ENCODE measurements at regions of chr1 and their contacts with region 1.

Region 1: DNA sequence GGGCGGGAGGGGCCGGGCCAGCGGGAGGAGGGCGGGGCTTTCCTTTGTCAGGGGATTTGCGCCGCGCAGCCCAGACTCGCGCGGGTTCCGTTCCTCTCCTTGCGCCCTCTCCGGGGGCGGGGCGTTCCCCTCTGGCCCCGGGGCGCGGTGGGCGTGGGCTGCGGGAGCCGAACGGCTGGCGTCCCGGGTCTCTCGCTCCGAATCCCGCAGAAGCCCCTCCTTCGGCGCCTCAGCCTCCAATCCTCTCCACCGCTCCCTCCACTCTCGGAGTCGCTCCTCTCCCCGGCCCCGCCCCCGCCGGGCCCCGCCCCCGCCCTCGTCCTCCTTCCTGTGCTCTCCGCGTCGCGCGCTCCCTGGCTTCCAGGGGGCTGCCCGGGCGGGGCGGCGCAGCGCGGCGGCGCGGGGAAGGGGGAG is 82.8 kb upstream of the BMP8A start:
- DNase-seq: peak; percentile 83 to 98
- H3K4me3 ChIP-seq: peak overlapping the region; percentile 97
- H3K27ac ChIP-seq: no peak overlapping the region
- H3K4me1 ChIP-seq: peaks cover 56% of the 10 kb centered on the region
- H3K27me3 ChIP-seq: no peaks in the 10 kb centered on the region
- CTCF ChIP-seq: no peak

Region 2: GRCh38 chr1:39098546-39099250 is 309.9 kb before region 1 on chr1:
- CTCF ChIA-PET with region 1: interaction called, 13 read pairs
- POLR2A ChIA-PET with region 1: no interaction called
- intact Hi-C with region 1: loop called (anchors 2 kb)
- DNase-seq: peak; percentile 76 to 94
- H3K4me3 ChIP-seq: no peak overlapping the region
- H3K27ac ChIP-seq: no peak overlapping the region
- H3K4me1 ChIP-seq: peaks cover 27% of the 10 kb centered on the region
- H3K27me3 ChIP-seq: no peaks in the 10 kb centered on the region
- CTCF ChIP-seq: peak; percentile 89

Region 3: DNA sequence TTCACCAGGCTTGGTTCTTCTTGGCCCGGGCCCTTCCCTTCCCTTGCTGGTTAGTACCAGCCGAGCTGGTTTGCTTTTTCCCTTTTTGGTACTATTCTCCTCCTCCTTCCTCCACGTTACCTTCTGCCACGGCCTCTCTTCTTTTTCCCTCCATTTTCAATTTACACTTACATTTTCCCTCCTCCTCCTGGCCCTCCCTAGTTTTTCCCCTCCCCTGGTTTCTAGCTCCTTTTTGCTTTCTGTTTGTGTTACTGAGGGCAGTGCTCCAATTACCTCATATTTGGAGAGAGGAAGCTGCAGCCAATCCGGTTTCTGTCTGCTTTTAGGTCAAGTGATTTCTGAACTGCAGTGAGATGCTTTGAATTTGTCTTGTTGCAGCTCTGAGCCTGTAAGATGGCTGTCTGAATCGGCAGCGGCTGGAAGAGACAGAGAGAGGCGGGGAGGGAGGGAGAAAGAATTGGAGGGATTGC is 140.5 kb before region 1 on chr1:
- CTCF ChIA-PET with region 1: no interaction called
- POLR2A ChIA-PET with region 1: no interaction called
- intact Hi-C with region 1: loop called (anchors 1 kb)
- DNase-seq: no peak
- H3K4me3 ChIP-seq: no peak overlapping the region
- H3K27ac ChIP-seq: no peak overlapping the region
- H3K4me1 ChIP-seq: no peaks in the 10 kb centered on the region
- H3K27me3 ChIP-seq: no peaks in the 10 kb centered on the region
- CTCF ChIP-seq: no peak

Region 4: DNA sequence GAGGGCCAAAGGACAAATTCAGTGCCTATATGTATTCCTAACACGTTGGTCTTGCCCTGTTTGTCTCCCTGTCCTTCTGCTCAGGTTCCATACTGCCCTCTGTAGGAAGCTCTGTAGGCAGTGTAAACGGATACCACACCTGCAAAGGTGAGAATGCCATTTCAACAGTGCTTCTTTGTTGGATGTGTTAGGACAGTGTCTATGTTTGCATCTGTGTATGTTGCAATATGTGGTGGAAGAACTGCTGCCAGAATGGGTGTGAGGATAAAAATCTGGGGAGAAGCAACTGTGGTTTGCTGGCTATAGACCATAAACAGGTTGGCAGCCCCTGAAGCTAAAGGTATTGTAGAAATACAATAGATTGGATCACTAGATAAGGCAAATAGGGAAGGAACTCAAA is 30.3 kb before region 1 on chr1:
- CTCF ChIA-PET with region 1: interaction called, 14 read pairs
- POLR2A ChIA-PET with region 1: no interaction called
- intact Hi-C with region 1: loop called (anchors 2 kb)
- DNase-seq: peak; percentile 34 to 84
- H3K4me3 ChIP-seq: no peak overlapping the region
- H3K27ac ChIP-seq: no peak overlapping the region
- H3K4me1 ChIP-seq: peaks cover 10% of the 10 kb centered on the region; the same call in 1 of the 2 replicates
- H3K27me3 ChIP-seq: no peaks in the 10 kb centered on the region
- CTCF ChIP-seq: peak; percentile 68

Region 5: DNA sequence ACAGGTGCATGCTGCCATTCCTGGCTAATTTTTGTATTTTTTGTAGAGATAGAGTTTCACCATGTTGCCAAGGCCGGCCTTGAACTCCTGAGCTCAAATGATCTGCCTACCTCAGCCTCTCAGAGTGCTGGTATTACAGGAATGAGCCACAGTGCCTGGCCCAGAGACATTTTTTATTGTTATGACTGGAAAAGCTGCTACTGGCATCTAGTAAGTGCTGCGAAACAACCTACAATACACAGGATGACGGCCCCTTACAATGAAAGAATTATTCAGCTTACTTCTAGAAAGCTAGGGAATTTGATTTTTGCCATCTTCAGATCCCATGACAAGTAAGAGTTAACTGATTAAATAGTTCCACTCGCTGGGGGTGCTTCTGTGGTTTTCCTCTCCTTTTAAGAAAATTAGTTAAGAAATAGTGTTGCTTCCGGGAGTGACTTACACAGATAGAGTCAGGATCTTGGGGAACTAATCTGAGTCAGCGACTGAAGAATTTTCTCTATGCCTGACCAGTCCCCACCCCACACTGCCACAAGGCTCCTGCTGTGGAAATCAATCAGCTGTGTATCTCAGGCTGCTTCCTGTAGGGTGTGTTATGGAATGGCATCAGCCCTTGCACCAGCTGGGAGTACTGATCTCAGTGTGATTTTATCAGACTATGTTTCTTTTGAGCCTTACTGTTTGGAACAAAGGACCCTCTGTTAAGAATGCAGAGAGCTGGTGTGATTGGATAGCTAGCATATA is 10.2 kb before region 1 on chr1:
- CTCF ChIA-PET with region 1: interaction called, 19 read pairs
- POLR2A ChIA-PET with region 1: interaction called, 15 read pairs
- intact Hi-C with region 1: loop called (anchors 1 kb)
- DNase-seq: peak; percentile 91 to 100
- H3K4me3 ChIP-seq: peak overlapping the region; percentile 22; the same call in 1 of the 2 replicates
- H3K27ac ChIP-seq: peak overlapping the region; percentile 91
- H3K4me1 ChIP-seq: peaks cover 66% of the 10 kb centered on the region
- H3K27me3 ChIP-seq: no peaks in the 10 kb centered on the region
- CTCF ChIP-seq: no peak

Region 6: GRCh38 chr1:39738622-39739366 is 330.1 kb after region 1 on chr1 and contains the start of gene PPIE:
- CTCF ChIA-PET with region 1: no interaction called
- POLR2A ChIA-PET with region 1: interaction called, 14 read pairs
- intact Hi-C with region 1: no loop called
- DNase-seq: peak; percentile 61 to 80
- H3K4me3 ChIP-seq: peak within 1 kb of the TSS; percentile 67
- H3K27ac ChIP-seq: no peak within 1 kb of the TSS
- H3K4me1 ChIP-seq: peaks cover 10% of the 10 kb centered on the region
- H3K27me3 ChIP-seq: peaks cover 13% of the 10 kb centered on the region; the same call in 1 of the 2 replicates
- CTCF ChIP-seq: no peak
- total RNA-seq, gene PPIE: 81.1 and 89.5 TPM in 2 replicates